Aorta (tissue), 5 donors: ENCODE measurements at regions of chr16 and their contacts with region 1.

Region 1: DNA sequence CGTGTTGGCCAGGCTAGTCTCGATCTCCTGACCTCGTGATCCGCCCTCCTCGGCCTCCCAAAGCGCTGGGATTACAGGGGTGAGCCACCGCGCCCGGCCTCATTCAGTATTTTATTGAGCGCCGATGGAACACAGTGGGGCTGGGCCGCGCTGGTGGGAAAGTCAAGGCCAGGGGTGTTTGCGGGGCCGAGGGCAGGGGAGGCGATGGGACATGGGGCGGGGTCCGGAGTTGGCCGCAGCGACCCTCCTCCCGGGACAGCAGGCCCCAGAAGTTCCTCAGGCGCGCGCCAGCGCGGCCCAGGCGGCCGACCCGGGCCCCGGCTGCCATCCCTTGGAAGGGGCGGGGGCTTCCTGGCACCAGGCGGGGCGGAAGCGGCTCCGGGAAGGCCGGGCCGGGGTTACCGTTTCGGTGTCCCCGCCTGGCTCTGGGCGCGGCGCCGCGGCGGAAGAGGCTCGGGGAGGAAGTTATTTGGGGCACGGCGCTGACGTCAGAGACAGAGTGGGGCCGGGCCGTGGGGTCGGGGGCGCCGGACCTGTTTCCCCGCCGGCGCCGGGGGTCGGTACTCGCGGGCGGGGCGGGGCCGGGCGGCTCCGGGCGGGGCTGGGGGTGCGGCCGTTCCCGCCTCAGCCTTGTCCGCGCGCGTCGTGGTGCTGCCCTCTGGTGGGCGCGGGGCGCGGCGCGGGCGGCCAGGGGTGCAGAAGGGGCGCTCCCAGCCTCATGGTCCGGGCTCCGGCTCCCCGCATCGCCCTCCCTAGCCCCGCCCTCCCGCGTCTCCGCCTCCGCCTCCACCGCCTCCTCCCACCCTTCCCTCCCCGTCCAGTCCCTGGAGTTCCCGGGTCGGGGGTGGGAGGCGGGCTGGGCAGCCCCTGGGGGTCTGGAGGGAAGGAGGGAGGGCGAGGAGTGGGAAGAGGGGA is 952 bp upstream of the PRSS27 start:
- DNase-seq: peak; percentile 89 to 95
- ATAC-seq: peak; percentile 91
- H3K4me3 ChIP-seq: peak overlapping the region; percentile 53 to 71
- H3K27ac ChIP-seq: no peak overlapping the region
- H3K4me1 ChIP-seq: no peaks in the 10 kb centered on the region
- H3K27me3 ChIP-seq: no peaks in the 10 kb centered on the region

Region 2: GRCh38 chr16:2752035-2752849 is 31.3 kb after region 1 on chr16 and contains the start of gene SRRM2:
- intact Hi-C with region 1: loop called in 1 of 2 experiments (anchors 1 kb)
- DNase-seq: peak; percentile 97 to 98
- ATAC-seq: peak; percentile 96
- H3K4me3 ChIP-seq: peak within 1 kb of the TSS; percentile 53 to 94
- H3K27ac ChIP-seq: peak within 1 kb of the TSS; percentile 23 to 97
- H3K4me1 ChIP-seq: peaks cover 0 to 2% of the 10 kb centered on the region in 2 donors
- H3K27me3 ChIP-seq: no peaks in the 10 kb centered on the region
- total RNA-seq, gene SRRM2: 552 to 716 TPM

Region 3: DNA sequence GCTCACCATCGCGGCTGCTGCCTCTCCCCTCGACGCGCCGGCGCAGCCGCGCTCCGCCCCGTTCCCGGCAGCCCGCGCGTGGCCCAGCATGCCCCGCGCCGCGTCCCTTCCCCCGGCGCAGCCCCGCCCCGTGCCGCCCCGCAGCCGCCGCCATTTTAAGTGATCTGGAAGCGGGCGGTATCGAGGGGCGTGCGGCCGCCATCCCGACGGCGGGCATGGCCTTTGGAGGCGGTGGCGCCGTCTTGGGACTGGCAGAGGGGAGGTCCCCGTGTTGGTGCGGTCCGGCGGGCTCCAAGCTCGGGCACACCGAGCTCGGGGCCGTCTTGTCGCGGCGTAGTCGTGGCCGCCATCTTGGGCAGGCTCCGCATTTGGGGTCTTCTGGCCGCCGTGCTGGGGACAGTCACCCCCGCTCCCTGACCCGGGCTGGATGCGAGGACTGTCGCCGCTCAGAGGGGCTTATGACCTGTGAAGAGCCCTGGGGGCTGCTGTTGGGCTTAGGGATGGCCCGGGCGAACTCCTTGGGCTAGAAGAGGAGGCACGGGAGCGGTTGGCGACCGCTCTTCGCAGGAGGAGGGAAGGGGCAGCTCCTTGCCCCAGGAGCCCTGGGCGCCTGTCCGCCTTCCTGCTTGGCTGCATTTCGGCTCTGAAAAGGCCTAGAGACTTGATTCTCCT is 56.4 kb after region 1 on chr16 and contains the start of gene ELOB:
- intact Hi-C with region 1: loop called in 1 of 2 experiments (anchors 2 kb)
- DNase-seq: peak; percentile 92 to 97
- ATAC-seq: peak; percentile 94
- H3K4me3 ChIP-seq: peak within 1 kb of the TSS; percentile 67 to 87
- H3K27ac ChIP-seq: peak within 1 kb of the TSS; percentile 79 to 88
- H3K4me1 ChIP-seq: no peaks in the 10 kb centered on the region
- H3K27me3 ChIP-seq: no peaks in the 10 kb centered on the region
- total RNA-seq, gene ELOB: 146 to 174 TPM